ENCODE measurements at regions of chr16 and their contacts with region 1.

Region 1: DNA sequence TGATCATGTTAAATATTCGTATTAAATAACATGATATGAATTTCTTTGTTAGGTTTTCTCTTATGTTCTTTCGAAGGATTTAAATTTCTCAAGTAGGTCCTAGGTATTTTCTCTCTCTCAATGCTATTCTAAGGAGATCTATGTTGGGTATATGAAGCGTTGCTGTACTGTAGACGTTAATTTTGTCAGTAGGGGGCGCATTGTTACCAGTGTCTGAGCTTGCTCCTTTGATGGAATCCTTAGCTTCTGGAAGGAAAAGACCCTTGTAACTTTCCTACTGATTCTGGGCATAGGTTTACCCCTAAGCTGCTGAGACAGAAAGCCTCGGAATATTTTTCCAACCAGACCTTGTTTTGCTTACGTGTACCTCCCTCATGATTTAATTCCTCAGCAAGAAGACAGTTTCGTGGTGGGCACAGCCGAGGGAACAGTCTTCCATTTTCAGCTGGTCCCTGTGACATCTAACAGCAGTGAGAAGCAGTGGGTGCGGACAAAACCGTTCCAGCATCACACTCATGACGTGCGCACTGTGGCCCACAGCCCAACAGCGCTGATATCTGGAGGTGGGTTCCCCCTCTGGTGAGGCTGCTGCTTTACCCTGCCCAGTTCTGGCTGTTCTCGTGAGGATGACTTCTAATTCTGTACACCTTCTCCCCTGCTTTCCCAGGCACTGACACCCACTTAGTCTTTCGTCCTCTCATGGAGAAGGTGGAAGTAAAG is 17.9 kb downstream of the UTP4 start:
- DNase-seq: peak; percentile 81
- ATAC-seq: peak; percentile 96
- H3K4me3 ChIP-seq: no peak overlapping the region
- H3K27ac ChIP-seq: no peak overlapping the region
- H3K4me1 ChIP-seq: peaks cover 2% of the 10 kb centered on the region; the same call in 1 of the 2 replicates
- H3K27me3 ChIP-seq: no peaks in the 10 kb centered on the region
- CTCF ChIP-seq: peak; percentile 88
- POLR2A ChIP-seq: no peak
- RAD21 ChIP-seq: peak; percentile 88

Region 2: GRCh38 chr16:69166221-69166833 is 16.0 kb after region 1 on chr16:
- CTCF ChIA-PET with region 1: interaction called, 17 read pairs
- POLR2A ChIA-PET with region 1: no interaction called
- dilution Hi-C with region 1: no loop called
- in situ Hi-C with region 1: no loop called
- intact Hi-C with region 1: no loop called
- DNase-seq: peak; percentile 82
- ATAC-seq: peak; percentile 69
- H3K4me3 ChIP-seq: no peak overlapping the region
- H3K27ac ChIP-seq: peak overlapping the region; percentile 25
- H3K4me1 ChIP-seq: peaks cover 10% of the 10 kb centered on the region
- H3K27me3 ChIP-seq: no peaks in the 10 kb centered on the region
- CTCF ChIP-seq: no peak
- POLR2A ChIP-seq: no peak
- RAD21 ChIP-seq: no peak

Region 3: DNA sequence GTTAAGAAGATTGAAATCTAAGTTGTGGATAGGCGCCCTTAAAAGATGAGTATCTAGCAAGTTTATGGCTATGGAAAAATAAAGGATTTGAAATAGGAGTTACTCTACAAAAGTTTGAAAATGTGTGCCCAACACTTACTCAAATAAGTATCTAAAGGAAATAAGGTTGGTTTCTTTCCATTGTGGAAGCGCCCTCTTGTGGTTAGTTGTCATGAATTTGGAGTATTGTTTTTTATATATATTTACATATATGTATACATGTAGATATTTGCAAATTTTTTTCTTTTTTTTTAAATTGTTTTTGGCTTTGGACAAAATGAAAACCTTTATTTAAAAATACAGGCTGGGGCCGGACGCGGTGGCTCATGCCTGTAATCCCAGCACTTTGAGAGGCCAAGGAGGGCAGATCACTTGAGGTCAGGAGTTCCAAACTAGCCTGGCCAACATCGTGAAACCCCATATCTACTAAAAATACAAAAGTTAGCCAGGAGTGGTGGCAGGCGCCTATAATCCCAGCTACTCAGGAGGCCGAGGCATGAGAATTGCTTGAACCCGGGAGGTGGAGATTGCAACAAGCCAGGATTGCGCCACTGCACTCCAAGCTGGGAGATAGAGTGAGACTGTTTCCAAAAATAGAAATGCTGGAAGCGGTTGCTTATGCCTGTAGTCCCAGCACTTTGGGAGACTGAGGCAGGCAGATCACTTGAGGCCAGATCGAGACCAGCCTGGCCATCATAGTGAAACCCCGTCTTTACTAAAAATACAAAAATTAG is 136.8 kb after region 1 on chr16:
- CTCF ChIA-PET with region 1: interaction called, 10 read pairs
- POLR2A ChIA-PET with region 1: no interaction called
- dilution Hi-C with region 1: no loop called
- in situ Hi-C with region 1: loop called (anchors 5 kb)
- intact Hi-C with region 1: loop called (anchors 1 kb)
- DNase-seq: peak; percentile 78
- ATAC-seq: peak; percentile 67
- H3K4me3 ChIP-seq: no peak overlapping the region
- H3K27ac ChIP-seq: peak overlapping the region; percentile 64; the same call in 1 of the 2 replicates
- H3K4me1 ChIP-seq: peaks cover 9% of the 10 kb centered on the region
- H3K27me3 ChIP-seq: no peaks in the 10 kb centered on the region
- CTCF ChIP-seq: peak; percentile 57
- POLR2A ChIP-seq: no peak
- RAD21 ChIP-seq: peak; percentile 63

Region 4: GRCh38 chr16:69310653-69311532 is 160.6 kb after region 1 on chr16 and contains the start of gene VPS4A:
- CTCF ChIA-PET with region 1: no interaction called
- POLR2A ChIA-PET with region 1: no interaction called
- dilution Hi-C with region 1: no loop called
- in situ Hi-C with region 1: no loop called
- intact Hi-C with region 1: loop called (anchors 1 kb)
- DNase-seq: peak; percentile 94
- ATAC-seq: peak; percentile 99
- H3K4me3 ChIP-seq: peak within 1 kb of the TSS; percentile 78
- H3K27ac ChIP-seq: peak within 1 kb of the TSS; percentile 84
- H3K4me1 ChIP-seq: peaks cover 4% of the 10 kb centered on the region
- H3K27me3 ChIP-seq: no peaks in the 10 kb centered on the region
- CTCF ChIP-seq: peak; percentile 96
- POLR2A ChIP-seq: peak; percentile 70
- RAD21 ChIP-seq: peak; percentile 49
- total RNA-seq, gene VPS4A: 23.3 and 25.3 TPM in 2 replicates

Region 5: GRCh38 chr16:69680358-69680757 is 530.1 kb after region 1 on chr16:
- CTCF ChIA-PET with region 1: no interaction called
- POLR2A ChIA-PET with region 1: no interaction called
- dilution Hi-C with region 1: no loop called
- in situ Hi-C with region 1: no loop called
- intact Hi-C with region 1: no loop called
- DNase-seq: no peak
- ATAC-seq: no peak
- H3K4me3 ChIP-seq: no peak overlapping the region
- H3K27ac ChIP-seq: no peak overlapping the region
- H3K4me1 ChIP-seq: no peaks in the 10 kb centered on the region
- H3K27me3 ChIP-seq: no peaks in the 10 kb centered on the region
- CTCF ChIP-seq: no peak
- POLR2A ChIP-seq: no peak
- RAD21 ChIP-seq: no peak